Panc1 (cell line): ENCODE measurements at regions of chr10 and their contacts with region 1.

Region 1: DNA sequence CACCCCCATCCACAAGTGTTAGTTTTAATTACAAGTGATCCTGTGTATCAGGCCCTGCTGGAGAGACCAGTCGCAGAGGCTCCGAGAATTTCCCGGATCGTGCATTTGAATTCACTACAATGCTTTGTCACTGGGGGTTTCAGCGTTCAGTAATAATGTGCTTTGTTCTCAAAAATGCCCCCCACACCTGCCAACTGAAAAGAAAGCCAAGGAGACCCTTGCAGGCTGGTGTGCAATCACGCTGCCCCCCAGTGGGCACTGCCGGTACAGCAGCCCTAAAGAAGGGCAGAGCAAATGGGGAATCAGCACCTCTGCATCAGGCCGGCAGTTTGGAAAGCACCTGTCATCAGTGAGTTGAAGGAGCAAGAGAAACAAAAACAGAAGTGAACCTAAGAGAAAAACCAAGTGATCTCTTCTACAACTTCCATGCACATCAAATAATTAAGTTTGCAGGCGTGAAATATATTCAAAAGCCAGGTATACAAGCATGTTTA is 177.6 kb downstream of the PARD3 start:
- DNase-seq: peak; percentile 45
- ATAC-seq: peak; percentile 71; the same call in 1 of the 2 replicates
- H3K4me3 ChIP-seq: no peak overlapping the region
- H3K27ac ChIP-seq: peak overlapping the region; percentile 23; the same call in 1 of the 2 replicates
- H3K4me1 ChIP-seq: peaks cover 8% of the 10 kb centered on the region; the same call in 1 of the 2 replicates
- H3K27me3 ChIP-seq: no peaks in the 10 kb centered on the region
- CTCF ChIP-seq: peak; percentile 92

Region 2: DNA sequence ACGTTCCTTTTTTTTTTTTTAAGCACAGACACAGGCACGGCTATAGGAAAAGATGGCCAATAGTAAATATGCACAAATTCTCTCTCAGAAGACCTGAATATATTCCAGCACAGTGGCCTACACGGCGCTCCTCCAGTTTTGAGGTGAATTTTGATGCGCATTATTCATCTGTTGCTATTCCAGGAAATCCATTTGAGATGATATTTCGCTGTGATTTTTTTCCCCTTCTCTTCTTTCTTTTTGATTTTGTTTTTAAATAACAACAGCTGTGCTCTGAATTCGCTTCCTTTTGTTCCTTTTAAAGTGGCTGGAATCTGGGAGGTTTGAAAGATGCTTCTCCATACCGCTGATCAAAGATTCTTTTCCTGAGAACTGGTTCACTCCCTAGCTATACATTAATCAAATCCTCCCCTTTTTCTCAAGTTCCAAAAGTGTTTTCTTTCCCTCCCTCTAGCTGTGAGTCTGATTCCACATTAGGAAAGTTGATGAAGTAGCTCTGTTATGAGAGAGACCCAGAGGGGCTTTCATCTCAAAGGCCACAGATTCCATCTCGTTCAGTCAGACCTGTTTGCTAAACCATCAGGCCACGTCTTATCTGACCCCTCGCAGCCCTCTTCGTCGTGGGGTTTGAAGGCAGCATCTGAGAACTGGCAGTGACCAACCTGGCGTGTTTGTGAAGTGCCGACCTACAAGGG is 700.3 kb before region 1 on chr10:
- CTCF ChIA-PET with region 1: no interaction called
- POLR2A ChIA-PET with region 1: interaction called, 22 read pairs
- in situ Hi-C with region 1: no loop called
- intact Hi-C with region 1: no loop called
- DNase-seq: no peak
- ATAC-seq: no peak
- H3K4me3 ChIP-seq: no peak overlapping the region
- H3K27ac ChIP-seq: no peak overlapping the region
- H3K4me1 ChIP-seq: no peaks in the 10 kb centered on the region
- H3K27me3 ChIP-seq: no peaks in the 10 kb centered on the region
- CTCF ChIP-seq: no peak

Region 3: GRCh38 chr10:34528320-34528719 is 109.1 kb before region 1 on chr10:
- CTCF ChIA-PET with region 1: no interaction called
- POLR2A ChIA-PET with region 1: no interaction called
- in situ Hi-C with region 1: no loop called
- intact Hi-C with region 1: loop called (anchors 5 kb)
- DNase-seq: no peak
- ATAC-seq: peak; percentile 91
- H3K4me3 ChIP-seq: peak overlapping the region in 1 of 2 experiments; percentile 5; a peak in 1 of 4 replicates
- H3K27ac ChIP-seq: peak overlapping the region; percentile 87
- H3K4me1 ChIP-seq: peaks cover 30% of the 10 kb centered on the region
- H3K27me3 ChIP-seq: no peaks in the 10 kb centered on the region
- CTCF ChIP-seq: no peak